Aorta (tissue), 5 donors: ENCODE measurements at regions of chr2 and their contacts with region 1.

Region 1: DNA sequence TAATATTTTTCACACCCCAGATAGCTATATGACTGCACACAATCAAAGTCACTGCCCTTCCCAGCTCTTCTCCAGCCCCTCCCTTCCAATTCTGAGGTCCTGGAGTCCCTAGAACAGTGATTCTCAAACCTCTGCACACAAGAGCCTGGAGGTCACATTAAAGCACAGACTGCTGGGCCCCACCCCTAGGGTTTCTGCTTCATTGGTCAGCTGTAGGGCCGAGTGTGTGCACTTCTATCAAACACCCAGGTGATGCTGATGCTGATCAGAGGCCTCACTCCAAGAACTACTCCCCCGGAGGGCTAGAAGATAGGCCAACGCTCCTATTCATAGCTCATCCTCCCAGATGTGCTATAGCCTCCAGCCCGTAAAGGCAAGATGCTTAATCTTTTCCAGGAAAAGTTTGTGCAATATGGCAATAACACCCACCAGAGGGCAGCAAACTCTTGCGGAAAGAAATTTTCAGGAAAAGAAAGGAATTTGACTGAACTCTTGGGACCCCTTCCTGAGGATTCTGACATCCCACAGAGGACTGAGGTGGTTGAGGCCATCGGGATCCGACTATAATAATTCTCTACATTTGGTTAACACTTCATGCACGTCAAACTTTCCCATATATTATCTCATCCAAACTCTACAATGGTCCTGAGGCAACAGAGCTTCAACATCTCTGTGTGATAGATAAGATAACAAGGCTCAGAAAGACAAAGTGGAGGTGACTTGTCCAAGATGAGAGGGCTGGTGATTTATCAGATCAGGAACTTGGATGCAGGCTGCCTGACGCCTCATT is 194.2 kb upstream of the PKDCC start:
- DNase-seq: no peak
- ATAC-seq: peak; percentile 43
- H3K4me3 ChIP-seq: no peak overlapping the region
- H3K27ac ChIP-seq: no peak overlapping the region
- H3K4me1 ChIP-seq: no peaks in the 10 kb centered on the region
- H3K27me3 ChIP-seq: no peaks in the 10 kb centered on the region

Region 2: GRCh38 chr2:42086500-42086953 is 232.9 kb after region 1 on chr2:
- intact Hi-C with region 1: loop called (anchors 2 to 5 kb)
- DNase-seq: no peak
- ATAC-seq: peak; percentile 68
- H3K4me3 ChIP-seq: no peak overlapping the region
- H3K27ac ChIP-seq: no peak overlapping the region
- H3K4me1 ChIP-seq: peaks cover 0 to 4% of the 10 kb centered on the region in 2 donors
- H3K27me3 ChIP-seq: no peaks in the 10 kb centered on the region